Activated naive CD4-positive, alpha-beta T cell treated with anti-CD3 and anti-CD28 coated beads for 36 hours (primary cell): ENCODE measurements at regions of chr7 and their contacts with region 1.

Region 1: DNA sequence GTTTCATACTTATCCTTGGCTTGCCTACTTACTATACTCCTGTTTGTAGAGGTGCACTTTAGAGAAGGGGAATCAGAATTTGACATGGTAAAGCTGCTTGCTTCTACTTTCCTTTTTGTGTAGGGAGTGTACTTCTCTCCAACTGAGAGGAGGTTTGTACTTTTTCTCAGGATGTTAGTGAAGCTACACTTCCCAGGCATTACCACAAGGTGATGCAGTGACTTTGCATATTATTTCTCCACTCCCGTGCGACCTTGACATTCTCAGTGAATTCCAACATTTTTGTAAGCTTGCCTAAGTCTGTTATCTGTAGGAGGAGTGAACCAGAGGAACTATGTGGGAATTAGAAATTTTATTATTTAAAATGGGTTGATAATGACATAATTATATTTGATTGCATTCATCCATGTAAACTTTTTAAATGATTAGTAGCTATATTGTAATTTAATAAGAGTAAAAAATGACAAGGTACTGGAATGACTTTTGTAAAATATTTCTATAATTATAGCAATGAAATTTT is 5.2 kb downstream of the TAX1BP1 start:
- DNase-seq: peak; percentile 5
- H3K4me3 Mint-ChIP-seq: no peak overlapping the region
- H3K27ac Mint-ChIP-seq: no peak overlapping the region
- H3K4me1 Mint-ChIP-seq: peaks cover 51% of the 10 kb centered on the region
- H3K27me3 Mint-ChIP-seq: no peaks in the 10 kb centered on the region

Region 2: DNA sequence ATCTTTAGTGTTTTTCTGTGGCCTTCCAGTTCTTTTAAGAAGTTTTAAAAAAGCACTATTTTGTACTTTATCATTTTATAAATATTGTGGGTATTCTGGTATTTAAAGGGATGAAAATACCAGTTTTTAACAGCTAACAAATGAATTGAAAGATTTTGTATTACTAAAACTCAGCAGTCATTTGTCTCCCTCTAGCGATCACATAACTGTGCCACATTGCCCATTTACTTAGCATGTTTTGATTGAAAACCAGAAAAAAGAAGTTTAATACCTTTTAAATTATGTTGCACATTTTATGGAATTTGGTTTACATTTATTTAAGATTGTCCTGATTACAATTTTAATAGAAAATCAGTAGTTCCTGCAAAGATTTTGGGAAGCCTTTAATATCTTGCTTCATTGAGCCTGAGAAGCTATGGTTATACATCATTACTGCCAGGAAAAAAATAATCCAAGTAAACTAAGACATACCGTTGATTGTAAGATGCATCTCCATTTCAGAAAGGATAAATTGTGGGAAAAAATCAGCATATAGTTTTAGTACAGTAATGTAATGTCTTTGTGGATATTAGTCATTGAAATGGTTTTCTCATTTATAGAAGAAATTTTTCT is 29.7 kb after region 1 on chr7:
- CTCF ChIA-PET with region 1: interaction called, 14 read pairs
- intact Hi-C with region 1: no loop called
- DNase-seq: no peak
- H3K4me3 Mint-ChIP-seq: no peak overlapping the region
- H3K27ac Mint-ChIP-seq: no peak overlapping the region
- H3K4me1 Mint-ChIP-seq: peaks cover 21% of the 10 kb centered on the region
- H3K27me3 Mint-ChIP-seq: no peaks in the 10 kb centered on the region